Right ventricle myocardium superior (tissue), 1 donor: ENCODE measurements at regions of chr13 and their contacts with region 1.

Region 1: DNA sequence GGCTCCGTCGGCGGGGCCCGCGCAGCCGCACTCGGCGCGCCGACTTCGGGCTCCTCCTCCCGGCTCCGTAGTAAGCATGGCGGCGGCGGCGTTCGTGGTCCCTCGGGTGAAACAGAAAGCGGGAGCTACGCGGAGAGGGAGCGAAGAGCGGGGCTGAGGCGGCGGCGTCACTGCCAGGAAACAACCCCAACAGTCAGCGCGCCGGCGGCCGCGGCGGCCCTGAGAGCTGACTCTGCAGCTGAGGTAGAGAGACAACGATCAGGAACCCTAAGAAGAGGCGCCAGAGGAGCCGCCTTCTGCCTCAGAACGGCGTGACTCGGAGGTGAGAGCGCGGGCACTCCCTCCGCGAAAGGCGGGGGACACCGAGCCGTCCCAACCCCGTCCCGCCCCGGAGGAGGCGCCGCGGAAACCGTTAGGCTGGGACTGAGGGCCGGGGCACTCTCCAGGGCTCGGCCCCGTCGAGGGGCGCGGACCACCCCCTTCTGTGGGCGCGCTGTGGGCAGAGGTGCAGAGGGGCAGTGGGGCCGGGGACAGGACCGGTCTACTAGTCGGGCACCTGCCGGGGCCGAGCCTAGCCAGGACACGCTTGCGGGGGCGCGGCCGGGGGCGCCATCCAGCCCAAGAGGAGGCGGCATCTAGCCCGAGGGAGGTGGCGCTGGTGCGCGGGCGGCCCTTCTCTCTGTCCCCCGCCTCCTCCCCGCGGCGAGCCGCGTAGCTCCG is at the start of gene FNDC3A:
- DNase-seq: peak; percentile 92
- ATAC-seq: peak; percentile 96
- total RNA-seq, gene FNDC3A: 16.9 TPM

Region 2: GRCh38 chr13:48542581-48543341 is 433.3 kb before region 1 on chr13:
- intact Hi-C with region 1: no loop called
- DNase-seq: peak; percentile 71
- ATAC-seq: peak; percentile 93

Region 3: GRCh38 chr13:49033101-49033500 is 57.1 kb after region 1 on chr13:
- intact Hi-C with region 1: no loop called
- DNase-seq: no peak
- ATAC-seq: no peak

Region 4: GRCh38 chr13:49110122-49110912 is 134.3 kb after region 1 on chr13:
- intact Hi-C with region 1: loop called (anchors 10 kb)
- DNase-seq: peak; percentile 88
- ATAC-seq: peak; percentile 92